K562 (cell line): ENCODE measurements at regions of chr16 and their contacts with region 1.

Region 1: GRCh38 chr16:20806168-20807050 is at the starts of genes ERI2 and REXO5:
- DNase-seq: peak; percentile 91 to 97 (median 92)
- ATAC-seq: peak; percentile 94
- H3K4me3 ChIP-seq: peak within 1 kb of the TSS; percentile 96
- H3K27ac ChIP-seq: peak within 1 kb of the TSS; percentile 98
- H3K4me1 ChIP-seq: peaks cover 24% of the 10 kb centered on the region in 2 experiments
- H3K27me3 ChIP-seq: no peaks in the 10 kb centered on the region
- CTCF ChIP-seq: peak; percentile 59 to 66 (median 59)
- EP300 ChIP-seq: peak; percentile 57
- POLR2A ChIP-seq: peak; percentile 96
- RAD21 ChIP-seq: peak; percentile 5 to 40; a peak in 2 of 4 replicates
- polyA plus RNA-seq, gene ERI2: 23.3 to 33.1 TPM
- polyA plus RNA-seq, gene REXO5: 10.5 to 13.1 TPM

Region 2: DNA sequence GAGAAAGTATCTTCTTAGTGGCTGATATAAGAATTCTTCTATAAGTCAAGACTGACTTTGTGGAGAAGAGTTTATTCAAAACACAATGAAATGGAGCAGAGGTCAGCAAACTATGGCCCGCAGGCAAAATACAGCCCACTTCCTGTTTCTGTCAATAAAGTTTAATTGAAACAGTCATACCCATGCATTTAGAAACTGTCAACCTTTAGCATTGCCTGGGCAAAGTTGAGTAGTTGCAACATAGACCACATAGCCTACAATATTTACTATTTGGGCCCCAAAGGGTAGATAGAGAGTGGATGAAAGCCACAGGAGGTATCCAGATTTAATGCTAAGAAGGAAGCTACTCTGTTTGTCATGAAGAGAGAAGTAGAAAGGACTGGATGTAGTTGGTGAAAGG is 268.2 kb before region 1 on chr16:
- CTCF ChIA-PET with region 1: no interaction called
- POLR2A ChIA-PET with region 1: no interaction called
- in situ Hi-C with region 1: no loop called
- intact Hi-C with region 1: loop called (anchors 10 kb)
- DNase-seq: no peak
- ATAC-seq: no peak
- H3K4me3 ChIP-seq: no peak overlapping the region
- H3K27ac ChIP-seq: no peak overlapping the region
- H3K4me1 ChIP-seq: no peaks in the 10 kb centered on the region; a peak in 1 of 5 replicates
- H3K27me3 ChIP-seq: no peaks in the 10 kb centered on the region; a peak in 1 of 5 replicates
- CTCF ChIP-seq: no peak
- EP300 ChIP-seq: no peak
- POLR2A ChIP-seq: no peak
- RAD21 ChIP-seq: no peak

Region 3: GRCh38 chr16:20741554-20742285 is 64.7 kb before region 1 on chr16 and contains the start of gene THUMPD1:
- CTCF ChIA-PET with region 1: no interaction called
- POLR2A ChIA-PET with region 1: interaction called, 4 read pairs
- in situ Hi-C with region 1: no loop called
- intact Hi-C with region 1: loop called (anchors 5 kb)
- DNase-seq: peak; percentile 93 to 97 (median 95)
- ATAC-seq: peak; percentile 93
- H3K4me3 ChIP-seq: peak within 1 kb of the TSS; percentile 96
- H3K27ac ChIP-seq: peak within 1 kb of the TSS; percentile 93
- H3K4me1 ChIP-seq: peaks cover 38 to 55% of the 10 kb centered on the region in 2 experiments
- H3K27me3 ChIP-seq: no peaks in the 10 kb centered on the region
- CTCF ChIP-seq: peak; percentile 30 to 43 (median 40); a peak in 3 of 6 replicates
- EP300 ChIP-seq: peak; percentile 35; the same call in 1 of the 2 replicates
- POLR2A ChIP-seq: peak; percentile 90
- RAD21 ChIP-seq: peak in 1 of 2 experiments; percentile 18; a peak in 2 of 4 replicates
- polyA plus RNA-seq, gene THUMPD1: 37.8 to 41.0 TPM

Region 4: DNA sequence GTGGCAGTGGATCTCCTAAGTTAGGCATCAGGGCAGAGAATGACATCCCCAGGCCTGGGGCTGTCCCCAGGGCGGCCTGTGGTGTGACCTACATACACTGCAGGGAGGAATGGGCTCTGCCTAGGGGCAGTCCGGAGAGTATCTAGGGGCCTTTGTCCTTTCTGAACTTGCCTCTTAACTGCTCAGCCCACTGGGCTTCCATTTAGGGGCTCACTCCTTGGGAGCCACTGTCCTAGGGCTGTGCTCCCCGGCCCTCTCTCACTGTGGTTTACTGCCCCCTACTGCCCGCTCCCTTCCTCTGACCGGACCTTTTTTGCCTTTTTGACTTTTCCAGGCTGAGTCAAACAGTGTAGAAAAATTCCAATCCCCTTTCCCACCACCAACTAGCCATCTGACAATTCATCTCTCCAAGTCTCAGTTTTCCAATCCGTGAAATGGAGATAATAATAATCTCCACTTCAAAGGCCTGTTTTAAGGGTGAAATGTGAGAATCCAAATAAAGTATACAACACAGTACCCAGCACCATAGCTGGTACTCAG is 277.4 kb after region 1 on chr16:
- CTCF ChIA-PET with region 1: no interaction called
- POLR2A ChIA-PET with region 1: interaction called, 3 read pairs
- in situ Hi-C with region 1: no loop called
- intact Hi-C with region 1: loop called (anchors 5 kb)
- DNase-seq: peak; percentile 52 to 67 (median 60)
- ATAC-seq: peak; percentile 98
- H3K4me3 ChIP-seq: no peak overlapping the region
- H3K27ac ChIP-seq: no peak overlapping the region
- H3K4me1 ChIP-seq: no peaks in the 10 kb centered on the region; a peak in 1 of 5 replicates
- H3K27me3 ChIP-seq: peaks cover 0 to 7% of the 10 kb centered on the region in 2 experiments; a peak in 2 of 5 replicates
- CTCF ChIP-seq: peak; percentile 75 to 88 (median 83)
- EP300 ChIP-seq: no peak
- POLR2A ChIP-seq: no peak
- RAD21 ChIP-seq: peak; percentile 92 to 94